ENCODE measurements at regions of chr1 and their contacts with region 1.

Region 1: GRCh38 chr1:87328272-87329050 is at the start of gene LMO4:
- DNase-seq: peak; percentile 94
- CTCF ChIP-seq: no peak

Region 2: GRCh38 chr1:87449348-87449963 is 121.0 kb after region 1 on chr1:
- in situ Hi-C with region 1: loop called (anchors 25 kb)
- DNase-seq: peak; percentile 40
- CTCF ChIP-seq: no peak

Region 3: GRCh38 chr1:87953732-87954344 is 625.4 kb after region 1 on chr1:
- in situ Hi-C with region 1: loop called (anchors 25 kb)
- DNase-seq: peak; percentile 17
- CTCF ChIP-seq: peak; percentile 79

Measured in GM13977 (cell line).